WTC11 (cell line): ENCODE measurements at regions of chr2 and their contacts with region 1.

Region 1: DNA sequence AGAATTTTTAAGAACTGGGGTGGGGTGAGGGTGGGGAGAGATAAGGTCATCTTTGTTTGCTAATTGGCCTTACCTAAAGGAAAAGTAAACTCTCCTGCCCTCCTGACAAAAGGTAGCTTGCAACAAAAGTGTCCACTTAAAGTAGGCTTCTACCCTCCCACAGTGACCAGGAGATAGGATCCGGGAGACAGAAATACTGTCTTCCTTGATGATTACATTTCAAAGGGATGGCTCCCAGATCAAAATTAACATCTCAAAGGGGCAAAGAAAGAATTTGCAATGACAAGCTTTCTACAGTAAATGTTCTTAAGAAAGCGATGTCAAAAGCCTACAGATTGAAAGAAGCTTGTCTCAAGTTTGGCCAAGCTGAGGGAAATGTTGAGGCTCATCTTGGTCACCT is 775.3 kb downstream of the CPS1 start:
- DNase-seq: no peak
- ATAC-seq: peak; percentile 96
- H3K4me3 Mint-ChIP-seq: no peak overlapping the region
- H3K27ac Mint-ChIP-seq: no peak overlapping the region
- H3K4me1 Mint-ChIP-seq: peaks cover 36% of the 10 kb centered on the region
- H3K27me3 Mint-ChIP-seq: peaks cover 41% of the 10 kb centered on the region
- CTCF ChIP-seq: no peak

Region 2: GRCh38 chr2:211035548-211036185 is 296.1 kb before region 1 on chr2:
- CTCF ChIA-PET with region 1: no interaction called
- POLR2A ChIA-PET with region 1: no interaction called
- DNase-seq: no peak
- ATAC-seq: peak; percentile 52
- H3K4me3 Mint-ChIP-seq: no peak overlapping the region
- H3K27ac Mint-ChIP-seq: peak overlapping the region; percentile 82
- H3K4me1 Mint-ChIP-seq: peaks cover 3% of the 10 kb centered on the region
- H3K27me3 Mint-ChIP-seq: no peaks in the 10 kb centered on the region
- CTCF ChIP-seq: no peak; the same call in 1 of the 2 replicates

Region 3: DNA sequence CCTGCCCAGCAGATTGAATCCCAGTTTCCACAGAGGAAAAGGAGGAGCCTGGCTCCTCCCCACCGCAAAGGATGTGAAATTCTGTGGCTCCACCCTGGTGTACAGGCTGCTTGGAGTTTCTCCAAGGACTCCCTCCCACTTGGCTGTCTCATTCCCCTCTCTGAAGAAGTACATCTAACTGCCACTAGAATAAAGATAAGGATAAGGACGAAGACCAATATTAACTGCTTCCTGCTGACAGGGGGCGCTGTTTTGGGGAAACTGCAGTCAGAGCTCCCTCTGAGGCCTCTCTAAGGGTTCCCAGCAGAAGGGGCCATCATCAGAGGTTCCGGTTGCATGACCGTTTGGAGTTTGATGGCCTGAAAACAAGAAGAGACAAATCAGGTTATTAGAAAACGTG is 15.6 kb after region 1 on chr2:
- CTCF ChIA-PET with region 1: interaction called, 13 read pairs
- POLR2A ChIA-PET with region 1: no interaction called
- DNase-seq: peak; percentile 33
- ATAC-seq: peak; percentile 62
- H3K4me3 Mint-ChIP-seq: no peak overlapping the region
- H3K27ac Mint-ChIP-seq: no peak overlapping the region
- H3K4me1 Mint-ChIP-seq: peaks cover 35% of the 10 kb centered on the region
- H3K27me3 Mint-ChIP-seq: no peaks in the 10 kb centered on the region
- CTCF ChIP-seq: peak; percentile 51